Dendritic cell treated with granulocyte-macrophage colony-stimulating factor and Interleukin-4, amounts not matched to agents 40 ng/mL and 50 ng/mL, for 4 days (primary cell): ENCODE measurements at regions of chr13 and their contacts with region 1.

Region 1: GRCh38 chr13:23466144-23467002 is 32.9 kb upstream of the SACS start:
- H3K4me3 Mint-ChIP-seq: peak overlapping the region; percentile 74
- H3K27ac Mint-ChIP-seq: peak overlapping the region; percentile 31
- H3K4me1 Mint-ChIP-seq: peaks cover 33% of the 10 kb centered on the region
- H3K27me3 Mint-ChIP-seq: peaks cover 11% of the 10 kb centered on the region

Region 2: GRCh38 chr13:23391752-23392151 is 74.6 kb before region 1 on chr13:
- intact Hi-C with region 1: no loop called
- H3K4me3 Mint-ChIP-seq: no peak overlapping the region
- H3K27ac Mint-ChIP-seq: no peak overlapping the region
- H3K4me1 Mint-ChIP-seq: no peaks in the 10 kb centered on the region
- H3K27me3 Mint-ChIP-seq: no peaks in the 10 kb centered on the region

Region 3: GRCh38 chr13:23902975-23903905 is 436.9 kb after region 1 on chr13:
- intact Hi-C with region 1: loop called (anchors 5 kb)
- H3K4me3 Mint-ChIP-seq: no peak overlapping the region
- H3K27ac Mint-ChIP-seq: no peak overlapping the region
- H3K4me1 Mint-ChIP-seq: peaks cover 5% of the 10 kb centered on the region
- H3K27me3 Mint-ChIP-seq: peaks cover 47% of the 10 kb centered on the region